Activated T-helper 1 cell treated with anti-CD3 and anti-CD28 coated beads, Interleukin-12 subunit alpha, Interleukin-12 subunit beta, Interleukin-2, Interleukin-4 antibody, amounts not matched to agents 30 ng/mL and 10 ng/mL and 1 ng/mL, durations not matched to agents 14 hours and 24 hours and 36 hours (primary cell): ENCODE measurements at regions of chr1 and their contacts with region 1.

Region 1: DNA sequence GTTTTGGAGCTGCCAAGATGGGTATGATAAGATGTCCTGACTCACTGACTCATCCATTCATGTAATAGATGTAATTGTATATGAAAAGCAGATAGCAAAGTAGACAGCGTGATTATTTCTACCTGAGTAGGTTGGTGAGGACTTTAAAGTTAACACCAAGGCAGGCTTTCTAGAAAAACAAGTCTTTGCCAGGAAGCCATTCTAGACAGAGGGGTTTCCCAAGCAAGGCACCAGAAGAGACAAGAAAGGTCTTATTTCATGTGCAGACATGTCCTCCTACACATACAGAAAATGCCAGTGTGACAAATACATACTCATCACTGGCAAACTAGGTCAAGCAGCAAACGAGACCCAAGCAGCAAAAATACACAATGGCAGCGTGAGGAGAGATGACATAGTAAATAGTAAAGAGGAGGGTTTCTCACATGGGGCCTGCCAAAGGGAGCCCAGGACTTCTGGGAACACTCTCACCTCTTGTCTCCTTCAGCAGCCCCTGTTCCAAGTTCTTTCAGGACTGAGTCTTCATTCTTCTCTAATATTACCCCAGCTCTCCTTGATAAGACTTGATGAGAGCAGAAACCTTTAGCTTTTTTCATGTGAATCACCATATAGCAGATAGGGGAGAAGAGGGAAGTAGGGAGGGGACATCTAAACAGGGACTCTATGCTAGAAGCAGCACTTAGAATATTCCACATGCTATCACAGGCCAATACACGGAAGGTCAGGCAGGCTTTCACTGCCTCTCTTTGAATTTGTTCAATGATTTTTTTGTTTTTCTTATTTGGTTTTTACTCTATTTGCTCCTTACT is 114.6 kb upstream of the ATP1B1 start:
- DNase-seq: no peak
- H3K4me3 Mint-ChIP-seq: peak overlapping the region; percentile 12
- H3K27ac Mint-ChIP-seq: peak overlapping the region; percentile 77
- H3K4me1 Mint-ChIP-seq: peaks cover 23% of the 10 kb centered on the region
- H3K27me3 Mint-ChIP-seq: peaks cover 6% of the 10 kb centered on the region

Region 2: GRCh38 chr1:168673974-168674683 is 317.7 kb before region 1 on chr1:
- intact Hi-C with region 1: no loop called
- DNase-seq: no peak
- H3K4me3 Mint-ChIP-seq: no peak overlapping the region
- H3K27ac Mint-ChIP-seq: no peak overlapping the region
- H3K4me1 Mint-ChIP-seq: no peaks in the 10 kb centered on the region
- H3K27me3 Mint-ChIP-seq: peaks cover 5% of the 10 kb centered on the region

Region 3: GRCh38 chr1:169012416-169012815 is 20.5 kb after region 1 on chr1:
- intact Hi-C with region 1: loop called (anchors 1 kb)
- DNase-seq: no peak
- H3K4me3 Mint-ChIP-seq: no peak overlapping the region
- H3K27ac Mint-ChIP-seq: peak overlapping the region; percentile 11
- H3K4me1 Mint-ChIP-seq: peaks cover 22% of the 10 kb centered on the region
- H3K27me3 Mint-ChIP-seq: no peaks in the 10 kb centered on the region

Region 4: DNA sequence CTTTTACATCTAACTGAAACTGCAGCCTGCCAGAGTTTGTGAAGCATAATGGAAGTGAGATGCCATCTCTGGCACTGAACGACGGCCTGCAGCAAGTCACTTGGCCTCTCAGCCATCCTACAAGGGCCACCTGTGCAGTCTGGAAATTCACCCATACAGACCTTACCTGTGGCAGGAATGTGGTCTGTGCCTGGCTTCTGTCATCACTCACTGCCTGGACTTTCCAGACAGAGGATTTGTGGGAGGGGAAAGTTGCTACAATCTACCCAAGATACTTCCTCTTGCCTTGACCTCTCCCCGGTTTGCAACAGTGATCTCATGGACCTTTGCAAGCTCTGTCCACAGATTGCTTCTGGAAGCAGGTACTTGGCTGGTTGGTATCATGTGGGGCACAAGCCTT is 56.2 kb after region 1 on chr1:
- intact Hi-C with region 1: loop called (anchors 1 kb)
- DNase-seq: no peak
- H3K4me3 Mint-ChIP-seq: peak overlapping the region; percentile 23
- H3K27ac Mint-ChIP-seq: peak overlapping the region; percentile 69
- H3K4me1 Mint-ChIP-seq: peaks cover 73% of the 10 kb centered on the region
- H3K27me3 Mint-ChIP-seq: no peaks in the 10 kb centered on the region